Heart left ventricle (tissue), 16 donors: ENCODE measurements at regions of chr13 and their contacts with region 1.

Region 1: DNA sequence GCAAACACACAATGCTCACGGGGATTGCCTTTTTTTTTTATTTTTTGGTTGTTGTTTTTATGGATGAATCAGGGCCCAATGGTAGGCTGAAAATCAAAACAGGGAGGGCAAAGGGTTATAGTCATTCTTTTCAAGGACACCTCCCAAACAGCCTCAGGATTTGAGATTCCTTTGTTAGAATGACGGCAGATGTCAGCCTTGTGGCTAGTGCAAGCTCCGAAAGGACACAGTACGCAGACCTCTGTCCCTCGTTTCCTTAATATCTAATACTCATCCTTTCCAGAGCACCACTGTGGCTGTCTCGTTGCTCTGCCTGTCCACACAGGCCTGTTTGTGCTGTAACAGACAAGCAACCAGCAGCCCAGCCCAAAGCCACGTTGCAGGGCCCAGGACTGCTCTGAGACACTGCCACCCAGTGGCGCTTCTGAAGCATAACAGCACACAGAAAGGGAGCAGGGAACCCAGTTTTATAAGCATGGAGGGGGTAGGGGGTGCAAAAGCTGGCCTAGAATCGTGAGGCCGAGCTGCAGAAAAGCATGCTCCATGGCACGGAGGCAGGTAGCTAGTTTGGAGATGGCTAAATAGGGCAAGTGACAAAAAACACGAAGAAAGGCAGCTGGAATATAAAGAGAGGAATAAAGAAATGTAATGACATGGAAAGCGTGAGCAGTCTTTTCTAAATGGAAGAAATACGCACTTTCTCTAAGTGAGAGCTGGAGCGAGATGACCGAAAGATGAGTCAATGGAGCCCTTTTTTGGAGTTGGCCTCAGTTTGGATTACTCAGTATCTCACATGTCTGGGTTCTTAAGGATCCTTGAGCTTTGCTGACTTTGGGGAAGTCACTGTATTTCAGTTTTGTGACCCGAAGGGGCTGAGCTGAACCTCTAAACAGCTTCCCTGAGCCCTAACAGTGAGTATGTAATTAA is 40.7 kb upstream of the MEDAG start:
- DNase-seq: peak; percentile 75 to 88 (median 82)
- ATAC-seq: peak; percentile 77 to 87 (median 80)
- H3K4me3 ChIP-seq: no peak overlapping the region
- H3K27ac ChIP-seq: peak overlapping the region; percentile 14 to 82 (median 64)
- H3K4me1 ChIP-seq: peaks cover 0 to 47% (median 17%) of the 10 kb centered on the region in 12 donors
- H3K27me3 ChIP-seq: no peaks in the 10 kb centered on the region
- CTCF ChIP-seq: peak; percentile 83 to 95 (median 90)
- POLR2A ChIP-seq: no peak

Region 2: GRCh38 chr13:30673669-30674521 is 191.5 kb before region 1 on chr13:
- intact Hi-C with region 1: loop called in 5 of 10 experiments (anchors 5 to 10 kb)
- DNase-seq: peak; percentile 88 to 95 (median 91)
- ATAC-seq: peak; percentile 91 to 97 (median 95)
- H3K4me3 ChIP-seq: peak overlapping the region; percentile 30 to 80 (median 62)
- H3K27ac ChIP-seq: peak overlapping the region in 11 of 12 donors; percentile 64 to 86 (median 79)
- H3K4me1 ChIP-seq: peaks cover 0 to 12% (median 2%) of the 10 kb centered on the region in 12 donors
- H3K27me3 ChIP-seq: no peaks in the 10 kb centered on the region
- CTCF ChIP-seq: peak; percentile 48 to 96 (median 76)
- POLR2A ChIP-seq: peak in 1 of 2 donors; percentile 26

Region 3: GRCh38 chr13:30679483-30680330 is 185.7 kb before region 1 on chr13:
- intact Hi-C with region 1: loop called in 6 of 10 experiments (anchors 5 to 10 kb)
- DNase-seq: peak in 1 of 5 donors; percentile 33
- ATAC-seq: peak; percentile 52 to 85 (median 74)
- H3K4me3 ChIP-seq: no peak overlapping the region
- H3K27ac ChIP-seq: no peak overlapping the region
- H3K4me1 ChIP-seq: peaks cover 0 to 19% (median 0%) of the 10 kb centered on the region in 12 donors
- H3K27me3 ChIP-seq: no peaks in the 10 kb centered on the region
- CTCF ChIP-seq: peak; percentile 34 to 68 (median 53)
- POLR2A ChIP-seq: no peak

Region 4: DNA sequence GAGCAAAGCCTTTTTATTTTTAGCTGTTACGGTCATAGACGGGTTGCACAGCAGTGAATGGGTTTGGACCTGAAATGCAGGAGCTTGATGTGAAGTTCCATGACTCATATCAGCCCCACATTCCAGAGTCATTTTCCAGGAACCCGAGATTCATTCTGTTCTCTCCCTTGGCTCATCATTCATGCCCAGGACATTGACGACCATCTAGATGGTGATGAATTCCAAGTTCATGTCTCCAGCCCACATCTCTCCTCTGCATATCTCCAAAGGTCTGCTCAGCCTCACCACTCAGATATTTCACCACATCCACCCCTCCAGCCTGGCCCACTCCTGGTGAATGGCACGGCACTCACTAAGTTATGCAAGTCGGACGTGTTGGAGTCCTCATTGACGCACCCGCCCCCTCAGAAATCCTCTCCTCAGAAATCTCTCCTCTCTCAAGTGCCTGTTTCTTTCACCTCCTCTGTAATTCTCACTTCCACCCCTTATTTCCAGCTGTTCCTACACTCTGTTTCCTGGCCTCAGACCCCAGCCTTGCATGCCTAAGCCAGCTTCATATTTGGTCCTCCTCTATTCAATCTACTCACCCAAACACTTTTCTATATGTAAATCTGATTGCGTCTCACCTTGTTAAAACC is 46.9 kb before region 1 on chr13:
- intact Hi-C with region 1: loop called in 1 of 10 experiments (anchors 2 kb)
- DNase-seq: peak in 1 of 5 donors; percentile 72
- ATAC-seq: peak in 1 of 4 donors; percentile 91
- H3K4me3 ChIP-seq: no peak overlapping the region
- H3K27ac ChIP-seq: no peak overlapping the region
- H3K4me1 ChIP-seq: peaks cover 0 to 9% (median 0%) of the 10 kb centered on the region in 12 donors
- H3K27me3 ChIP-seq: no peaks in the 10 kb centered on the region
- CTCF ChIP-seq: no peak
- POLR2A ChIP-seq: no peak

Region 5: DNA sequence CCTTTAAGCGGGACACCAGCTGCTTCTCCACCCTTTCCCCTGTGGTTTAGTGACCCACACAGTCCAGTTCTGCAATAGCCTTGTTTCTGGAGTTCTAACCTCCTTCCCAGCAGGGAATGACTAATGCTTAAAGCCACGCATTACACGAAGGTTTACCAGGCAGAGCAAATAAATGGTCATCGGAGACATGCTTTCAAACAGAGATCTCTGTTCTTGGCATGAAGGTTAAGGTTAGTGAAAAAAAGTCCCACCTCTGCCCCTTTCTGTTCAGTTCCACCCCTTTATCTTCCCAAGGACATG is 15.4 kb after region 1 on chr13:
- intact Hi-C with region 1: no loop called
- DNase-seq: peak in 2 of 5 donors; percentile 38 to 50
- ATAC-seq: peak; percentile 84 to 95 (median 90)
- H3K4me3 ChIP-seq: no peak overlapping the region
- H3K27ac ChIP-seq: peak overlapping the region in 10 of 12 donors; percentile 32 to 73 (median 50)
- H3K4me1 ChIP-seq: peaks cover 0 to 18% (median 0%) of the 10 kb centered on the region in 12 donors
- H3K27me3 ChIP-seq: no peaks in the 10 kb centered on the region
- CTCF ChIP-seq: no peak
- POLR2A ChIP-seq: no peak

Region 6: DNA sequence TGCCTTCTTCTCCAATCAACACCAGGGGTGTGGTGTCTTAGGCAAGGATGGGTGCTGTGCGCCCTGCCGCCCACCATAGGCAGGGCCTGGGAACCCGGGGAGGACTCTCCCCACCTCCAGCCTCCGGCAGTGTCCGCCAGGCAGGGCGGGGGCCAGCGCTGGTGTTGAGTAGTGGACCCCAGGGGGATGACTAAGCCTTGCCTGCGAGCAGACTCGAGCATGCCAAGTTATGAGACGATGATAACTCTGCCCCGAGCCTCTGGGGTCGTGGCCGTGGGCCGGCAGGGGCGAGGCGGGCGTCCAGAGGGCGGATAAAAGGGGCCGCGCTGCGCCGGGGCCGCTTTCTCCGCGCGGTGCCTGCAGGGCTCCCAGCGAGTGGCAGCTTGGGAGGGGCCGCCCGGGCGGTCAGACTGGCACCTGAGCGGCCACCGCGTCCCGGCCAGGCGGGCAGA is 40.6 kb after region 1 on chr13 and contains the start of gene MEDAG:
- intact Hi-C with region 1: loop called in 1 of 10 experiments (anchors 5 kb)
- DNase-seq: peak; percentile 77 to 87 (median 86)
- ATAC-seq: peak; percentile 55 to 91 (median 87)
- H3K4me3 ChIP-seq: peak within 1 kb of the TSS; percentile 25 to 69 (median 54)
- H3K27ac ChIP-seq: peak within 1 kb of the TSS in 11 of 12 donors; percentile 4 to 79 (median 69)
- H3K4me1 ChIP-seq: peaks cover 0 to 43% (median 17%) of the 10 kb centered on the region in 12 donors
- H3K27me3 ChIP-seq: peaks cover 0 to 37% (median 4%) of the 10 kb centered on the region in 9 donors
- CTCF ChIP-seq: no peak
- POLR2A ChIP-seq: peak in 1 of 2 donors; percentile 30
- total RNA-seq, gene MEDAG: 4.2 to 41.9 (median 8.0) TPM

Region 7: DNA sequence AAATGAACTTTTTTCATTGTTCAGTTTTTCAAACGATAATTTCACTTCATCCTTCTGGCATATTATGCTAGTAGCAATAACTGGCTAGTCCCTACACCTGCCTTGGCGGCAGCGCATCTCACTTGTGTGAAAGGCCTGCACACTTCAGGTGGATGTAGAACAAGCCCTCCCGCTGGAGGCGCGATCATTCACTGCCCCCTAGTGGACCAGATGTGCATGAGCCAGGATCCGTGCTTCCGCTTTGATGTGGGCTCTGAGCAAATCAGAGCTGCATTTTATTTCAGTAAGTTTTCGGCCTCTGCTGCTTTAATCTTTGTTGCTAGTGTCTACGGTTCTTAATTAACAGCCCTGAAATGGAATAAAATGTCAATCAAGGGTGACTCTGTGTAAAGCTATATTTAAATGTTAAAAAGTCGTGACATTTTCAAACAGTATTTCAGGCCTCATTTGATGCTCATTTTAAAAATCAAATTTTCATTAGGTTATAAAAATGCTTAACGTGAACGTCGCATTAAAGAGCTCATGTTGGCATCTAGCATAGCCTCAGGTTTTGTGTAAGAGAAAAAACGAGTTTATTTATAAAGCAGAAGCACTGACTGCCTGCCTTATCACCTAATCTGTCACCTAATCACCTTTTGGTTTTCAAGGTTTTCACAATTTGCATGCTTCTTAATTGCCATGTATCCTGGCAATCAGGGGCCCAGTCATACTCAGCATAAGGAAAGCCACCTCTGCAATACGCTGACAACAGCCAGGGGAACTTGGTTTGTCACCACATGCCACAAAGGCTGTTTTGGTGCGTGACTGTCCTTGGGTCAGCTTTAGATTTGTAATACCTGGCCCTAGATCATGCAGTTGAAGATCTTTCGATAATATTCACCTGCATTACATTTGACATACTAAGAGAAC is 179.2 kb after region 1 on chr13:
- intact Hi-C with region 1: loop called in 5 of 10 experiments (anchors 5 to 10 kb)
- DNase-seq: peak; percentile 66 to 88 (median 75)
- ATAC-seq: peak; percentile 81 to 92 (median 84)
- H3K4me3 ChIP-seq: no peak overlapping the region
- H3K27ac ChIP-seq: peak overlapping the region in 2 of 12 donors; percentile 59 to 82
- H3K4me1 ChIP-seq: peaks cover 0 to 32% (median 10%) of the 10 kb centered on the region in 12 donors
- H3K27me3 ChIP-seq: peaks cover 0 to 18% (median 0%) of the 10 kb centered on the region in 9 donors
- CTCF ChIP-seq: peak; percentile 91 to 98 (median 95)
- POLR2A ChIP-seq: no peak